Activated CD8-positive, alpha-beta T cell treated with anti-CD3 and anti-CD28 coated beads, Interleukin-2, amount 10 ng/mL, durations not matched to agents 7 days and 5 days (primary cell): ENCODE measurements at regions of chr19 and their contacts with region 1.

Region 1: DNA sequence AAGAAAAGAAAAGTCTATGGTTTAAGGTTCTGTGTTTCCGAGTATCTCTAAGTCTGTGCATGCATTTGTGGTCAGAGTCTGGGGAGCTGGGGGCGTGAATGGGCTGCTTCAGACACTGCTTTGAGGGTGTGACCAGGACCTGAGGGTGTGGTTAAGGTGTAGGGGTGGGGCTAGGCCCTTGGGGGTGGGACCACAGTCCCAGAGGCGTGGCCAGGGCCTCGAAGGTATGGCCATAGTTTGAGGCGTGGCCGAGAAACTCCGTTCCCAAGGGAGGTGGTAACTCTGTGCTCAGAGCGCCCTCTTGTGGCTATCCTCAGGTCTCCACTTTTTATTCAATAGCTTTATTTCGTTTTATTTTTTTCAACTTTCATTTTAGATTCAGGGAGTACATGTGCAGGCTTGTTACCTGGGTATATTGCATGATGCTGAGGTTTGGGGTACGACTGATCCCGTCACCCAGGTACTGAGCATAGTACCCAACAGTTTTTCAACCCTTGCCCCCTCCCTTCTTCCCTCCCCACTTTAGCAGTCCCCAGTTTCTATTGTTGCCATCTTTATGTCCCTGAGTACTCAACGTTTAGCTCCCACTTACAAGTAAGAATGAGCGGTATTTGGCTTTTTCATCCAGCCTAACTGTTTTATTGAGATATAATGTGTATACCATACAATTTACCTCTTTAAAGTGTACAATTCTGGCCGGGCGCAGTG is 7.0 kb upstream of the CBLC start:
- DNase-seq: peak; percentile 99
- ATAC-seq: peak; percentile 99
- H3K4me3 Mint-ChIP-seq: peak overlapping the region; percentile 46
- H3K27ac Mint-ChIP-seq: peak overlapping the region; percentile 85
- H3K4me1 Mint-ChIP-seq: peaks cover 40% of the 10 kb centered on the region
- H3K27me3 Mint-ChIP-seq: peaks cover 8% of the 10 kb centered on the region

Region 2: GRCh38 chr19:44653977-44654774 is 116.5 kb before region 1 on chr19:
- CTCF ChIA-PET with region 1: interaction called, 36 read pairs
- POLR2A ChIA-PET with region 1: no interaction called
- DNase-seq: peak; percentile 82
- ATAC-seq: peak; percentile 90
- H3K4me3 Mint-ChIP-seq: no peak overlapping the region
- H3K27ac Mint-ChIP-seq: no peak overlapping the region
- H3K4me1 Mint-ChIP-seq: peaks cover 6% of the 10 kb centered on the region
- H3K27me3 Mint-ChIP-seq: no peaks in the 10 kb centered on the region

Region 3: GRCh38 chr19:44712864-44713515 is 57.7 kb before region 1 on chr19:
- CTCF ChIA-PET with region 1: interaction called, 10 read pairs
- POLR2A ChIA-PET with region 1: no interaction called
- DNase-seq: no peak
- ATAC-seq: no peak
- H3K4me3 Mint-ChIP-seq: no peak overlapping the region
- H3K27ac Mint-ChIP-seq: no peak overlapping the region
- H3K4me1 Mint-ChIP-seq: peaks cover 14% of the 10 kb centered on the region
- H3K27me3 Mint-ChIP-seq: no peaks in the 10 kb centered on the region

Region 4: GRCh38 chr19:44732615-44733014 is 38.1 kb before region 1 on chr19:
- CTCF ChIA-PET with region 1: interaction called, 32 read pairs
- POLR2A ChIA-PET with region 1: interaction called, 7 read pairs
- DNase-seq: no peak
- ATAC-seq: no peak
- H3K4me3 Mint-ChIP-seq: no peak overlapping the region
- H3K27ac Mint-ChIP-seq: no peak overlapping the region
- H3K4me1 Mint-ChIP-seq: peaks cover 12% of the 10 kb centered on the region
- H3K27me3 Mint-ChIP-seq: peaks cover 7% of the 10 kb centered on the region

Region 5: GRCh38 chr19:44782729-44783128 is 12.0 kb after region 1 on chr19:
- CTCF ChIA-PET with region 1: interaction called, 47 read pairs
- POLR2A ChIA-PET with region 1: no interaction called
- DNase-seq: no peak
- ATAC-seq: no peak
- H3K4me3 Mint-ChIP-seq: no peak overlapping the region
- H3K27ac Mint-ChIP-seq: no peak overlapping the region
- H3K4me1 Mint-ChIP-seq: peaks cover 7% of the 10 kb centered on the region
- H3K27me3 Mint-ChIP-seq: no peaks in the 10 kb centered on the region

Region 6: DNA sequence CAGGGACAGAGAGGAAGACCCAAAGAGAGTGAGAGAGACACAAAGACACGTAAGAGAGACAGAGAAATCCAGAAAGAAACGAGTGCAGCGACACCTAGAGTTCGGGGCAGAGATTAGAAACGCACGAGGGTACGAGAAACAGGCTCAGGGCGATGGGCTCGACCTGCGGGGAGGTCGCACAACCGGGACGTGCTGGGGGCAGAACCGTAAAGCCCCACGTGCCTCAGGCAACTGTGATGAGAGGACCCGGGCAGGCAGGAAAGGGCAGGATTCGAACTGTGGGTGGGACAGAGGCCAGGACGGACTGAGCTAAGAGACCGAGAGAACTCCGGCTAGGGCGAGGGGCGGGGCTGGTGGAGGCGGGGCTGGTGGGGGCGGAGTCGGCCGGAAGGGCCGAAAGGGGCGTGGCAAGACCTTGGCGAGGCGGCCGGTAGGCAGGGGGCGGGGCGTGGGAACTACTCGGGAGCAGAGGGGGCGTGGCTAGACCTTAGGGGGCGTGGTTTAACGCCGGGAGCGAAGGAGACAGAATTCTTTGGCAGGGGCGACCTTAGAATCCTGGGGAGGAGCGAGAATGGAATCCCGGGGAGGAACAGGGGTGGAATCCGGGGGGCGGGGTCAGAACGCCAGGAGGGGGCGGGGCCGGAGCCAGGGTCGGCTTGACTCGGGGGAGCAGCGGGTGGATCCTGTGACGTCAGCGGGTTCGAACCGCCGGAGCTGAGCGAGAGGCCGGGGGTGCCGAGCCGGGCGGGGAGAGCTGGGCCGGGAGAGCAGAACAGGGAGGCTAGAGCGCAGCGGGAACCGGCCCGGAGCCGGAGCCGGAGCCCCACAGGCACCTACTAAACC is 75.1 kb after region 1 on chr19 and contains the start of gene NECTIN2:
- CTCF ChIA-PET with region 1: interaction called, 10 read pairs
- POLR2A ChIA-PET with region 1: no interaction called
- DNase-seq: peak; percentile 91
- ATAC-seq: peak; percentile 80
- H3K4me3 Mint-ChIP-seq: peak within 1 kb of the TSS; percentile 79
- H3K27ac Mint-ChIP-seq: peak within 1 kb of the TSS; percentile 48
- H3K4me1 Mint-ChIP-seq: peaks cover 37% of the 10 kb centered on the region
- H3K27me3 Mint-ChIP-seq: peaks cover 43% of the 10 kb centered on the region
- total RNA-seq, gene NECTIN2: 0.26 to 0.31 TPM

Region 7: GRCh38 chr19:44856421-44857083 is 85.8 kb after region 1 on chr19:
- CTCF ChIA-PET with region 1: no interaction called
- POLR2A ChIA-PET with region 1: no interaction called
- DNase-seq: no peak
- ATAC-seq: no peak
- H3K4me3 Mint-ChIP-seq: no peak overlapping the region
- H3K27ac Mint-ChIP-seq: peak overlapping the region; percentile 22
- H3K4me1 Mint-ChIP-seq: peaks cover 13% of the 10 kb centered on the region
- H3K27me3 Mint-ChIP-seq: peaks cover 8% of the 10 kb centered on the region

Region 8: DNA sequence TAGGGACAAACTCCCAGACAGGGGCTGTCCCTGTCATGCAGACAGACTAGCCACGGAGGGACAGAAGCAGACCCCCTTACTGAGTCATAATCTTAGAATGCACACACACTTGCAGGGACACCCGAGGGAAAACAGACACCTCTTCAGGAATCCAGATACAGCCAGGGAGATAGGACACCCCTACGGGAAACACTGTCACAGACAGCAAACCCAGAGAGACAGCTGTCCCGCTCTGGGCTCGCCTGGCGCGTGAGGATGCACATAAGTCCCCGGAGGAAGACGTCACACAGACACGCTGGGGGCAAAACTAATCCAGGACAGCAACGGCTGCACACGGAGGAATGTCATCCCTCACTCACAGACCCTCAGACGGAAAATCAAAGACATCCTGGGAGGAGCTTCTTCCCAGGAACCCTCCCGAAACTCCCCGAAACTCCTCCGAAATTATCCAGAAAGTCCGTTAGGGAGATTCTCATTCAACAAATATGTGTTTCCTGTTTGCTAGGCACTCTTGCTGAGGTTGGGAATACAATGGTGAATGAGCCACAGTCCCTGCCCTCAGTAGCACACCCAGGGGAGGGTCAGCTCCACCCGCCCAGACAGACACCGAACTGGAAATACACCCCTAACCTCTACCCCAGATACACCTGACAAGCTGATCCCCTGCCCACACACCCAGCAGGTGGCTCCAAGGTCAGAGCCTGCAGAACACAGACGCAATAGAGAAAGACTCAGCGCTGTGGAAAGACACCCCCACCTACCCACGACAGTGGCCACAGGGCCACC is 105.2 kb after region 1 on chr19:
- CTCF ChIA-PET with region 1: no interaction called
- POLR2A ChIA-PET with region 1: no interaction called
- DNase-seq: no peak
- ATAC-seq: no peak
- H3K4me3 Mint-ChIP-seq: no peak overlapping the region
- H3K27ac Mint-ChIP-seq: no peak overlapping the region
- H3K4me1 Mint-ChIP-seq: peaks cover 15% of the 10 kb centered on the region
- H3K27me3 Mint-ChIP-seq: no peaks in the 10 kb centered on the region

Region 9: DNA sequence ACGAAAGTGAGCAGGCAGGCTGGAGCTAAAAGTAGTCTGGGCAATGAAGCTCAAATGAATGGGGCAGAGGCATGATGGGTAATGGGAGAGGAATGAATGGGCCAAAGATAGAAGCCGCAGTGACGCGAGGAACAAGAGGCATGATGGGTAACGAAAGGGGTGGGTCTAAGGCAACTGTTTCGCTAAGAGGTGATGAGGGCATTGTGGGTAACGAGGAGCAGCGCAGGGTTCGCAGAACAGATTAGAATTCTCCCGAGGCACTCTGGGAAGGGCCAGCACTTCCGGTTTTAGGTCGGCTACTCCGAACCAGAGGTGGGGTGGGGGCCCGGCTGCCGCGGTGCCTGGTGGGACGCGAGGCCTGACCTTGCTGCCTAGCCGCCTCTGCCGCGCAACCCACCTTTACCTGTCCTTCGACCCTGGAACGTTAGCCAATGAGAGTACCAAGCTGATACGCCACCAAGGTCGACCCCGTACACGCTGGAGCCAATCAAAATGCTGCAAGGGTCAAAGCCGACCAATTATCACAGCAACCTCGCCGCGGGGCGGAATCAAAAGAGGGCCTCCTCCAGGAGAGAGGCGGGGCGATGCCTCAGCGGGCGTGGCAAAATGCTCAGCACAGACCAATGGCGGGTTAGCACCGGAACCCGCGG is 119.8 kb after region 1 on chr19:
- CTCF ChIA-PET with region 1: no interaction called
- POLR2A ChIA-PET with region 1: no interaction called
- DNase-seq: peak; percentile 100
- ATAC-seq: peak; percentile 89
- H3K4me3 Mint-ChIP-seq: peak overlapping the region; percentile 77
- H3K27ac Mint-ChIP-seq: peak overlapping the region; percentile 97
- H3K4me1 Mint-ChIP-seq: peaks cover 38% of the 10 kb centered on the region
- H3K27me3 Mint-ChIP-seq: no peaks in the 10 kb centered on the region